Naive thymus-derived CD8-positive, alpha-beta T cell (primary cell): ENCODE measurements at regions of chr1 and their contacts with region 1.

Region 1: DNA sequence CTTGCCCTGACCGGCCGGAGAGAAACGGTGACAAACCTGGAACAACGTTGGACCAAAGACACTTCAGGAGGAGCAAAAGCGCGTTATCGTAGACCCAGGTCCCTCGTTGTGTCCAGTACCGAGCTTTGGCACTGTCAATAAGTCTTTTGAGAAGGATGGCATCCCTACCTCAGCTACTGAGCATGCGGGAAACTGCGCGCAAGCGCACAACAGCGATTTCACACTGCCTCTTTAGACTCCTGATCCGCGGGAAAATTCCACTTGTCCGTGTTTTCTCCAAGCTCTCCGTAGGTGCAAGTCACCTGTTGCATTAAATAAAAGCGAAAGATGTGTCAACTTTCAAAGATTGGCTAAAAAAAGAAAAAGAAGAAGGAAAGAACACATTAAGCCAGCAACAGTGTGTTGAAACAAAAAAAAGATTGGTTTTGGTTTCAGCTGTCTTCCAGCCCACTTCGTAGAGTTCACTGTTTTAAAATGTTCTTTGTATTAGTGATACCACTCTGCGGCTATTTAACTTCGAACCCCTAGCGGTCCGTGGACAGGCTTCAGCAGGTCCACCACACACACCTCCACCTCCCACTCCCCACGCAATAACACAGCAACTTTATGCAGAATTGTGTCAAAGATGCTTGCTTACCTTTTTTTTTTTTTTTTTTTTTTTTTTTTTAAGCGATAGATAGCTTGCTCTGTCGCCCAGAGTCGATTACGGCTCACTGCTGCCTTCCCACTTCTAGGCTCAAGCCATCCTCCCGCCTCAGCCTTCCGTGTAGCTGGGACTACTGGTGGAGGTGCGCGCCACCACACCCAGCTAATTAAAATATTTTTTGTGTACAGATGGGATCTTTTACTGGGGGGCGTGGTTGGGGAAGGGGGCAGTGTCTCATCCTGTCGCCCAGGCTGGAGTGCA is at the start of gene BPNT1:
- DNase-seq: peak; percentile 92 to 100 (median 98)
- ATAC-seq: peak; percentile 72
- H3K4me3 Mint-ChIP-seq: peak within 1 kb of the TSS; percentile 88 to 99 (median 98)
- H3K27ac Mint-ChIP-seq: peak within 1 kb of the TSS; percentile 72 to 97 (median 94)
- H3K4me1 Mint-ChIP-seq: peaks cover 3 to 43% (median 29%) of the 10 kb centered on the region in 4 donors
- H3K27me3 Mint-ChIP-seq: peaks cover 0 to 2% (median 0%) of the 10 kb centered on the region in 5 donors
- polyA plus RNA-seq, gene BPNT1: 15.0 to 18.4 (median 16.0) TPM

Region 2: GRCh38 chr1:220046052-220046930 is 43.6 kb before region 1 on chr1 and contains the start of gene EPRS1:
- POLR2A ChIA-PET with region 1: interaction called, 13 read pairs
- DNase-seq: peak; percentile 89 to 97 (median 94)
- ATAC-seq: peak; percentile 96 to 97
- H3K4me3 Mint-ChIP-seq: peak within 1 kb of the TSS; percentile 89 to 99 (median 94)
- H3K27ac Mint-ChIP-seq: peak within 1 kb of the TSS; percentile 90 to 98 (median 95)
- H3K4me1 Mint-ChIP-seq: peaks cover 10 to 40% (median 27%) of the 10 kb centered on the region in 4 donors
- H3K27me3 Mint-ChIP-seq: peaks cover 0 to 2% (median 0%) of the 10 kb centered on the region in 5 donors
- polyA plus RNA-seq, gene EPRS1: 47.8 to 54.3 (median 52.0) TPM

Region 3: GRCh38 chr1:220272047-220272840 is 182.3 kb after region 1 on chr1 and contains the start of gene RAB3GAP2:
- POLR2A ChIA-PET with region 1: interaction called, 12 read pairs
- DNase-seq: peak; percentile 95 to 99 (median 97)
- ATAC-seq: peak; percentile 93 to 94
- H3K4me3 Mint-ChIP-seq: no peak within 1 kb of the TSS
- H3K27ac Mint-ChIP-seq: no peak within 1 kb of the TSS
- H3K4me1 Mint-ChIP-seq: peaks cover 5 to 16% (median 14%) of the 10 kb centered on the region in 4 donors
- H3K27me3 Mint-ChIP-seq: peaks cover 0 to 11% (median 2%) of the 10 kb centered on the region in 5 donors
- polyA plus RNA-seq, gene RAB3GAP2: 16.6 to 22.8 (median 17.2) TPM